ENCODE measurements at regions of chr18 and their contacts with region 1.

Region 1: DNA sequence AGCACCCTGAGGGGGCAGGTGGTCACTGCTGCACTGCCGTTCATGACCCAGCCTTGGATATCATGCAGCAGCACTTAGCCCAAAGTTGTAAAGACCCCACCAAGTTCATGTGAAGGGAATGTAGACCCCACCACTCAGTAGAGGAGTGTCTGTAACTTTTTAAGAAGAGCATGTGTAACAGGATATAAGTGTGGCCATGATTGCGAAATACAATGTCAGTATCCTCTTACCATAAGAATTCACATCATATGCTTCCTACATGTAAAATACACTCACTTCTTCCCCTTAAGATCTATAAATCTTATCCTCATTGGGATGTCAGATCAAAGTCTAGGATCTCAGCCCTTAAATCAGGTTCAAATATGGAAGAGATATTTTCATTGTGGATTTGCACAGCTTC is 276.9 kb downstream of the PTPRM start:
- DNase-seq: no peak
- H3K4me3 ChIP-seq: no peak overlapping the region
- H3K27ac ChIP-seq: no peak overlapping the region
- H3K4me1 ChIP-seq: peaks cover 0 to 4% (median 0%) of the 10 kb centered on the region in 4 donors
- H3K27me3 ChIP-seq: no peaks in the 10 kb centered on the region
- CTCF ChIP-seq: no peak
- EP300 ChIP-seq: no peak
- POLR2A ChIP-seq: no peak

Region 2: DNA sequence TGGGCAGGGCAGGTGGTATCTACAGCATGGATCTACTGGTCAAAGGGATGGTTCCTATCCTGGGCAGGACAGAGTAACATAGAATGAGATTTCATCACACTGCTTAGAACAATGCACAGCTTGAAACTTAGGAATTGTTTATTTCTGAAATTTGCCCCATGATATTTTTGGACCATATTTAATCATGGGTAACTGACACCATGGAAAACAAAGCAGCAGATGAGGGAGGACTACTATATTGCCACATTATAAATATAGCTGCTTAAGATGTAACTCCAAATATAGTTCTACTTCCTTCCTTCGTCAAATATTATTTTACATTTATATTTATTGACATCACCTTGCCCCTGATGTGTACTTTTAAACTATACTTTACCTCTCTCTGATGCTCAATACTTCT is 22.2 kb before region 1 on chr18:
- in situ Hi-C with region 1: no loop called
- intact Hi-C with region 1: loop called (anchors 1 kb)
- DNase-seq: no peak
- H3K4me3 ChIP-seq: no peak overlapping the region
- H3K27ac ChIP-seq: no peak overlapping the region
- H3K4me1 ChIP-seq: peaks cover 0 to 7% (median 0%) of the 10 kb centered on the region in 4 donors
- H3K27me3 ChIP-seq: no peaks in the 10 kb centered on the region
- CTCF ChIP-seq: no peak
- EP300 ChIP-seq: no peak
- POLR2A ChIP-seq: no peak